MCF 10A (cell line): ENCODE measurements at regions of chr16 and their contacts with region 1.

Region 1: GRCh38 chr16:70653809-70654771 is 7.7 kb downstream of the IL34 start:
- DNase-seq: peak; percentile 89
- H3K4me3 Mint-ChIP-seq: peak overlapping the region; percentile 45
- H3K27ac Mint-ChIP-seq: no peak overlapping the region
- H3K4me1 Mint-ChIP-seq: peaks cover 11% of the 10 kb centered on the region
- H3K27me3 Mint-ChIP-seq: no peaks in the 10 kb centered on the region
- CTCF ChIP-seq: peak; percentile 78

Region 2: GRCh38 chr16:70337814-70338213 is 316.3 kb before region 1 on chr16:
- CTCF ChIA-PET with region 1: interaction called, 10 read pairs
- POLR2A ChIA-PET with region 1: no interaction called
- intact Hi-C with region 1: loop called (anchors 5 kb)
- DNase-seq: no peak
- H3K4me3 Mint-ChIP-seq: no peak overlapping the region
- H3K27ac Mint-ChIP-seq: no peak overlapping the region
- H3K4me1 Mint-ChIP-seq: no peaks in the 10 kb centered on the region
- H3K27me3 Mint-ChIP-seq: no peaks in the 10 kb centered on the region
- CTCF ChIP-seq: no peak

Region 3: DNA sequence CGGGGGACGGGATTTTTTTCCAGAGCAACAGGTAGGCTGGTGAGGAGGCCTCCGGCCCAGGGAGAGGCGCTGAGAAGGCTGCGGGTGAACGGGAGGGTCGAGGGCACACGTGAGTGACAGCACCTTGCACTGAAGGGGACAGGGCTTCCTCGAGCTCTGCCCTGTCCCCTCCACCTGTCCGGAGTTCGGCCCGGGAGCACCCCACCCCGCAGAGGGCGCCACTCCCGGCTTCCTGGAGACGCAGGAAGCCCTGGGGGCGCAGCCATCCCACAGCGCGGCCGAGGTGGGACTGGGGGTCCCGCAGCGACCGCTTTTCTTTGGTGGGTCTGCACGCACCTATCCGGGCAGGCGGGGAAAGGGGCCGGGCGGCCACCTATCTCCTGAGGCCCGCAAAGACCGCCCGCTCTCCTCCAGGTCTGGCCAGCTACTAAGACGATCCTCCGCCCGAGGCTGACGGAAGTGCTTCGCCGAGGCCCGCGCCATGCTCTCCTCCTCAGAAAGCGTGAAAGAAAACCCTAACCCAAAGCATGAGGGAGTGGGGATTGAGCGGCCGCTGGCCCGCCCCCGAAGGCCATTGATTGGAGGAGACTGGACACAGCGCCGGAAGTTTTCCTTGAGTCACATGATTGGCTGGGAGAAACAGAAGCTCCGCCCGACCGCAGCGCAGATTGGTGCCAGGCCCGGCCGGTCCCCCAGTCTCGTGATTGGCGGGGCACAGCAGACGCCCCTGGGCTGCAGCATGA is 273.1 kb before region 1 on chr16:
- CTCF ChIA-PET with region 1: interaction called, 6 read pairs
- POLR2A ChIA-PET with region 1: no interaction called
- intact Hi-C with region 1: loop called (anchors 5 kb)
- DNase-seq: peak; percentile 99
- H3K4me3 Mint-ChIP-seq: peak overlapping the region; percentile 90
- H3K27ac Mint-ChIP-seq: peak overlapping the region; percentile 83
- H3K4me1 Mint-ChIP-seq: no peaks in the 10 kb centered on the region
- H3K27me3 Mint-ChIP-seq: no peaks in the 10 kb centered on the region
- CTCF ChIP-seq: peak; percentile 39

Region 4: DNA sequence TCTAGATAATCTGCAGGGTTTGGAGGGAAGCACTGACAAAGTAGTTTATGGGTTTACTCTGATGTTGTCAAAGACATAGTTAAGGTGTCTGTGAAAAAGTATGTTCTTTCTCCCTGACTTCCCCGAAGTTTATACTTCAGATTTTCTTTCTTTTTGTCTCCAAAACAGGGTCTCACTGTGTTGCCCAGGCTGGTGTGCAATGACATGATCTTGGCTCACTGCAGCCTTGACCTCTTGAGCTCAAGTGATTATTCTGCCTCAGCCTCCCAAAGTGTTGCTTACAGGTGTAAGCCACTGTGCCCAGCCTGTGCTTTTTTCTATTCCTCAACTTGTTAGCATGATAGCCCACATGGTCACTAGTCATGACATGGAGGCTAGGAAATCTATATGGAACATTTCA is 109.5 kb before region 1 on chr16:
- CTCF ChIA-PET with region 1: interaction called, 11 read pairs
- POLR2A ChIA-PET with region 1: no interaction called
- intact Hi-C with region 1: no loop called
- DNase-seq: no peak
- H3K4me3 Mint-ChIP-seq: no peak overlapping the region
- H3K27ac Mint-ChIP-seq: peak overlapping the region; percentile 46
- H3K4me1 Mint-ChIP-seq: no peaks in the 10 kb centered on the region
- H3K27me3 Mint-ChIP-seq: no peaks in the 10 kb centered on the region
- CTCF ChIP-seq: no peak

Region 5: GRCh38 chr16:70561623-70562022 is 92.5 kb before region 1 on chr16:
- CTCF ChIA-PET with region 1: interaction called, 22 read pairs
- POLR2A ChIA-PET with region 1: no interaction called
- intact Hi-C with region 1: no loop called
- DNase-seq: peak; percentile 88
- H3K4me3 Mint-ChIP-seq: no peak overlapping the region
- H3K27ac Mint-ChIP-seq: peak overlapping the region; percentile 20
- H3K4me1 Mint-ChIP-seq: peaks cover 5% of the 10 kb centered on the region
- H3K27me3 Mint-ChIP-seq: no peaks in the 10 kb centered on the region
- CTCF ChIP-seq: no peak

Region 6: GRCh38 chr16:70576431-70577255 is 77.4 kb before region 1 on chr16:
- CTCF ChIA-PET with region 1: interaction called, 13 read pairs
- POLR2A ChIA-PET with region 1: interaction called, 5 read pairs
- intact Hi-C with region 1: loop called (anchors 5 kb)
- DNase-seq: peak; percentile 86
- H3K4me3 Mint-ChIP-seq: peak overlapping the region; percentile 10
- H3K27ac Mint-ChIP-seq: peak overlapping the region; percentile 83
- H3K4me1 Mint-ChIP-seq: peaks cover 38% of the 10 kb centered on the region
- H3K27me3 Mint-ChIP-seq: no peaks in the 10 kb centered on the region
- CTCF ChIP-seq: no peak

Region 7: DNA sequence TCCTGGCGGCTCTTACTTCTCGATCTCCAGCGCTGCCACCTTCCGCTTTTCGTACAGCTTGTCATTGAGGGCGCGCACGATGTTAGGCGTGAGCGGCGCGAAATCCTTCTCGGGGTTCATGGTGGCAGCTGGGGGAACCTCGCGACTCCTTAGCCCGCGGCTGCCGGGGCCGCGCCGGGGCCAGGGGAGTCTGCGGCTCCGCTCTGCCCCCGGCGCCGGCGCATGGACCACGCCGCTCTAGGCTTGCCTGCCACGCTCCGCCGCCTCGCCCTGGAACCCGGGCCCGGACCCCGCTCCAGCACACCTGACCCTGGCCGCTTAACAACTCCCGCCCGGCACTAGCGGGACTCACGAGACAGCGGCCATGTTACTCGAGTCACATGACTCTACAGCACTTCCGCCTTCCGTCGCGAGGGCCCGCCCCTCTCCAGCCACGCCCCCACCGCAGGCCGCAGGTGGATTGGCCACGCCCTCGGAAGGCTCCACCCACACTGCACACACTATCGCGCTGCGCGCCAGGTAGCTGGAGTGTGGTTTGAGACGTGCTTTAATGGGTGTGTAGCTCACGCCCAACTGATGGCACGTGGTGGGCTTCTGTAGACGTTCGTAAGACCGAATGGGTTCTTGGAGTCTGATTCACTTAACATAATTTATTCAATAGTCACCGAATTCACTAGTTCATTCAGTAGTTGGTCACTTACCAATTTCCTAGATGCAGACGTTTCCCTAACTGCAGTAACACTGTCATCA is 146.9 kb after region 1 on chr16 and contains the start of gene VAC14:
- CTCF ChIA-PET with region 1: no interaction called
- POLR2A ChIA-PET with region 1: no interaction called
- intact Hi-C with region 1: no loop called
- DNase-seq: peak; percentile 91
- H3K4me3 Mint-ChIP-seq: peak within 1 kb of the TSS; percentile 77
- H3K27ac Mint-ChIP-seq: peak within 1 kb of the TSS; percentile 87
- H3K4me1 Mint-ChIP-seq: peaks cover 32% of the 10 kb centered on the region
- H3K27me3 Mint-ChIP-seq: no peaks in the 10 kb centered on the region
- CTCF ChIP-seq: no peak
- total RNA-seq, gene VAC14: 25.5 and 47.9 TPM in 2 replicates